ENCODE measurements at regions of chr2 and their contacts with region 1.

Region 1: GRCh38 chr2:237322564-237322963 is 91.4 kb downstream of the COL6A3 start:
- DNase-seq: peak; percentile 71
- H3K4me3 Mint-ChIP-seq: no peak overlapping the region
- H3K27ac Mint-ChIP-seq: no peak overlapping the region
- H3K4me1 Mint-ChIP-seq: peaks cover 9% of the 10 kb centered on the region
- H3K27me3 Mint-ChIP-seq: peaks cover 59% of the 10 kb centered on the region
- CTCF ChIP-seq: peak; percentile 82

Region 2: GRCh38 chr2:237154082-237154638 is 168.4 kb before region 1 on chr2:
- CTCF ChIA-PET with region 1: no interaction called
- intact Hi-C with region 1: loop called (anchors 5 kb)
- DNase-seq: peak; percentile 73
- H3K4me3 Mint-ChIP-seq: no peak overlapping the region
- H3K27ac Mint-ChIP-seq: no peak overlapping the region
- H3K4me1 Mint-ChIP-seq: no peaks in the 10 kb centered on the region
- H3K27me3 Mint-ChIP-seq: peaks cover 15% of the 10 kb centered on the region
- CTCF ChIP-seq: peak; percentile 83

Region 3: GRCh38 chr2:237171396-237171795 is 151.2 kb before region 1 on chr2:
- CTCF ChIA-PET with region 1: no interaction called
- intact Hi-C with region 1: loop called (anchors 1 kb)
- DNase-seq: peak; percentile 21
- H3K4me3 Mint-ChIP-seq: no peak overlapping the region
- H3K27ac Mint-ChIP-seq: no peak overlapping the region
- H3K4me1 Mint-ChIP-seq: peaks cover 11% of the 10 kb centered on the region
- H3K27me3 Mint-ChIP-seq: peaks cover 22% of the 10 kb centered on the region
- CTCF ChIP-seq: peak; percentile 17

Region 4: DNA sequence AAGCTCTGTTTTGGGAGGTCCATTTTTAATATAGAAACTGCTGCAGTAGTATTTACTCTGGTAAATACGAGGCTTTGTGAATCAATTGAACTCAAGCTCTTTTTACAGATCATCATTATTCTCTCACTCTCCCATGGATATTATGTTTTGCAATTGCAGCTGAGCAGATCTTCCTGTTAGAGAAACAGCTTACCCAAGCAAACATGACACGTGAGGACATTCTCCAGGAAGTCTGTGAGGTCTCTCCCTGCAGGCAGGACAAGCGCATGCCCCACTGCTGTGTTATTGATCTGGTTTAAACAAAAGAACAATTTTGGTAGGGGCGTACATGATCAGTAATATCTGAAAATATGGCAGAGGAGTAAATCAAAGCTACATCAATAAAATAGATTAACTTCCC is 19.3 kb after region 1 on chr2:
- CTCF ChIA-PET with region 1: no interaction called
- intact Hi-C with region 1: no loop called
- DNase-seq: no peak
- H3K4me3 Mint-ChIP-seq: no peak overlapping the region
- H3K27ac Mint-ChIP-seq: no peak overlapping the region
- H3K4me1 Mint-ChIP-seq: no peaks in the 10 kb centered on the region
- H3K27me3 Mint-ChIP-seq: peaks cover 50% of the 10 kb centered on the region
- CTCF ChIP-seq: no peak

Region 5: DNA sequence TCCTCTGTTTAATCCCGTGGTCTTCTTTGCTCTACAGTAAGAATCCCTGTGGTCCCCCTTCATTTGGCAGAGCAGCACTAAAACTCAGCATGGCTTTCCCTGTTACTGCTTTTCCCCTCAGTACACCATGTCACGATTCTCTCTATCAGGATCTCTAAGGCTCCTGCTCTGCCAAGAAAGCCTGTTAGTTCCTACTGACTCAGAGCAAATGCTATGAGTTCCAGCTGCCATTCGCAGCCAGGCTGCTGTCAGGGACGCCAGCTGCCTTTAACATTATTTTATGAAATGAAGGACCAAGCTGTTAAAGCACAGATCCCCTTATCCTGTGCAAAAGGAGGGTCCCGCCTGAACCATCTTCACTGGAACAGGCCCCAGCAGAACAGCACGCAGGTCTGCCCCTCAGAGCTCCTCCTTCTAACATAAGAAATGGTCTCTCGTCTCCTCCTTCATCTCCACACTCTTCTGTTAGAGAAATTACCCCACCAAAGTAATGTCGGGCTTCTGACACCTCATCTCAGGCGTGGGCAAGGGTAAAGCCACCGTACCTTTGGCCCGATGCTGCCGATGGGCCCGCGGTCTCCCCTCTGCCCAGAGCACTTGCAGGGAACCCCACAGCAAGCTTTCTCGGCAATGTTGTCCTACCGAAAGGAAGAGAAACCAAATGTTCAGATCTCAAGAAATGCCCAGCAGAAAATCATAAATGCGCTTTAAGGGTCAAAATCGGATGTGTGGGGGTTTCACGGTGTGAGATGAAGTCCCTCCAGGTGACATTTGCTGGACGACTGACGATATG is 38.8 kb after region 1 on chr2:
- CTCF ChIA-PET with region 1: no interaction called
- intact Hi-C with region 1: no loop called
- DNase-seq: no peak
- H3K4me3 Mint-ChIP-seq: no peak overlapping the region
- H3K27ac Mint-ChIP-seq: no peak overlapping the region
- H3K4me1 Mint-ChIP-seq: no peaks in the 10 kb centered on the region
- H3K27me3 Mint-ChIP-seq: peaks cover 94% of the 10 kb centered on the region
- CTCF ChIP-seq: no peak

Region 6: GRCh38 chr2:237378650-237379049 is 56.1 kb after region 1 on chr2:
- CTCF ChIA-PET with region 1: no interaction called
- intact Hi-C with region 1: no loop called
- DNase-seq: no peak
- H3K4me3 Mint-ChIP-seq: no peak overlapping the region
- H3K27ac Mint-ChIP-seq: no peak overlapping the region
- H3K4me1 Mint-ChIP-seq: no peaks in the 10 kb centered on the region
- H3K27me3 Mint-ChIP-seq: peaks cover 100% of the 10 kb centered on the region
- CTCF ChIP-seq: no peak

Region 7: GRCh38 chr2:237650455-237650850 is 327.9 kb after region 1 on chr2:
- CTCF ChIA-PET with region 1: no interaction called
- intact Hi-C with region 1: no loop called
- DNase-seq: peak; percentile 70
- H3K4me3 Mint-ChIP-seq: no peak overlapping the region
- H3K27ac Mint-ChIP-seq: no peak overlapping the region
- H3K4me1 Mint-ChIP-seq: peaks cover 15% of the 10 kb centered on the region
- H3K27me3 Mint-ChIP-seq: peaks cover 44% of the 10 kb centered on the region
- CTCF ChIP-seq: no peak